ENCODE measurements at regions of chr3 and their contacts with region 1.

Region 1: DNA sequence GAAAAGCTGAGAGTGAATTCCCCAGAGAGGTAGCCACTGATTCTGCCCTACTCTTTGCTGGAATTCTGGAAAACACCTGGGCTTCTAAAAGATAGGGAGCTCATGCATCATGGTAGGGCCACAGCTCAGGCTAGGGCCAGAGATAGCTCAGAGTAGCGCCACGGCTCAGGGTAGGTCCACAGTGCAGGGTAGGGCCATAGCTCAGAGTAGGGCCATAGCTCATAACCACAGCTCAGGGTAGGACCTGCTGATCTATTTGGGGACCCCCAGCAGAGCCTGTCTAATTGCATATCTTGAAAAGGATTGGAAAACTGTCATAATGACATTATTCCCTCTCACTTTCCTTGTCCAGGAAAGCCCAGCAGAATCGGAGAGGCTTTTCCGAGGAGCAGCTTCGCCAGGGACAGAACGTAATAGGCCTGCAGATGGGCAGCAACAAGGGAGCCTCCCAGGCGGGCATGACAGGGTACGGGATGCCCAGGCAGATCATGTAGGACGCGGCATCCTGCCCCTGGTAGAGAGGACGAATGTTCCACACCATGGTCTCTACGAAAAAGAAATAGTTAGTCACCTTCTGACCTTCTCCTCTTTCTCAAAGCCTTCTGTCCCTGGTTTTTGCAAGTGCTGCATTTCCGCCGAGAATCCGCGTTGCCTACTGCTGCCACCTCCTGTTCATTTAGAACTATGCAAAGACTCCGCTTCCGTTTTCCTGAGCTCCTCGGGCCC is 14.5 kb downstream of the TAGLN3 start:
- DNase-seq: peak; percentile 72 to 74
- ATAC-seq: peak; percentile 86
- H3K4me3 ChIP-seq: no peak overlapping the region
- H3K27ac ChIP-seq: no peak overlapping the region
- H3K4me1 ChIP-seq: no peaks in the 10 kb centered on the region
- H3K27me3 ChIP-seq: no peaks in the 10 kb centered on the region

Region 2: DNA sequence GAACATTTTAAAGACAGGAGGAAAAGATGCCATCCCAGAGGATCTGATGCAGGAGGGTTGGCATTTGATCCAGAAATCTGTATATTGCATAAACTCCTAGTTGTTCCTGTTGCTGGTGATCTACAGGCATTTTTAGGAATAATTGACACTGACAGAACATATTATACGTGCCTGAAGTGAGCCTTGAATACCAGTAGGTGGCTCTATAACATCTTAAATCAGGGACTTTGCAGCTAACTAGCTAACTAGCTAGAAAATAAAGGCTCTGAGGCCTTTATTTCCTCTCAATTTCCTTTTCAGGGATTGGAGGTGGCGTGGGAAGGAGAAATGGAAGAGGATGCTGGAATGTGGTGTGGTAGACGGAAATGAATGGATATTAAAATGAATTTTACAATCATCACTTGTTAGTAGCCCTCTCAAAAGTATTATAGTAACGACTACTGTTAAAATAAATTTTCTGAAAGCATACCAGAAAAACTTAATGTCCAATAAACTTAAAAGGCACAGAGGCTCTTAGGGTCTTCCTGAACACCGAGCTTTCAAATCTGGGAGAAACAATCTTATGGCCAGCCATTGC is 344.2 kb before region 1 on chr3:
- intact Hi-C with region 1: loop called (anchors 2 kb)
- DNase-seq: no peak
- ATAC-seq: peak; percentile 84
- H3K4me3 ChIP-seq: no peak overlapping the region
- H3K27ac ChIP-seq: no peak overlapping the region
- H3K4me1 ChIP-seq: no peaks in the 10 kb centered on the region
- H3K27me3 ChIP-seq: no peaks in the 10 kb centered on the region

Region 3: DNA sequence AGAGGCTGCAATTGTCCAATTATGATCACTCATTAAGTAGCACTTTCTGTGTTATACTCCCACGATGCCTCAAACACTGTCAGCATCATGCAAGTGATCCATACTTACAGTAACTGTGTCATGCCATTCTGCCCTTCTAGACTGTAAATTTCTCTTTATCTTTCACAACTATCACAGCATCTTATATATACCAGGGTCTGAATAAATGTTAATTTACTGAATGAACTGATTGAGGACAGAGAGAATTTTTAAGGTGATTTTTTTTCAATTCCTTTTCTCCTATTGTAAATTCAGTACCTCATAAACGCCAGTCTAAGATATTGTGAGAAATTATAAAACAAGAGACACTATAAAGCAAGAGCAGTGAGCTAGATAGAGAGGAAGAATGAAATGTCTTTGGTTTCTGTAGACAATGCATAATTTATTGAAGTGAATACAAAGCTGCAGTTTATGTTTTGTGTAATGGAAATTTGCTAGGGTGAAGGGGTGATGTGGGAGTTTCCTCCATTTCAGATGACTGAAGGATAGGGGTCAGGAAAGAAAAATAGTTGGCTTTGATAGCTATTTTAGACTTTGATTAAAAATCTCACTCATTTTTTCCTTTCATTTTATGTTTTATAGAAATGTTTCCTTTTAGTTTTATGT is 337.1 kb after region 1 on chr3:
- intact Hi-C with region 1: no loop called
- DNase-seq: no peak
- ATAC-seq: no peak
- H3K4me3 ChIP-seq: no peak overlapping the region
- H3K27ac ChIP-seq: no peak overlapping the region
- H3K4me1 ChIP-seq: peaks cover 0 to 3% of the 10 kb centered on the region in 2 donors
- H3K27me3 ChIP-seq: no peaks in the 10 kb centered on the region